Activated CD8-positive, alpha-beta memory T cell treated with anti-CD3 and anti-CD28 coated beads, Interleukin-2, amount 10 ng/mL, durations not matched to agents 7 days and 5 days (primary cell): ENCODE measurements at regions of chr2 and their contacts with region 1.

Region 1: DNA sequence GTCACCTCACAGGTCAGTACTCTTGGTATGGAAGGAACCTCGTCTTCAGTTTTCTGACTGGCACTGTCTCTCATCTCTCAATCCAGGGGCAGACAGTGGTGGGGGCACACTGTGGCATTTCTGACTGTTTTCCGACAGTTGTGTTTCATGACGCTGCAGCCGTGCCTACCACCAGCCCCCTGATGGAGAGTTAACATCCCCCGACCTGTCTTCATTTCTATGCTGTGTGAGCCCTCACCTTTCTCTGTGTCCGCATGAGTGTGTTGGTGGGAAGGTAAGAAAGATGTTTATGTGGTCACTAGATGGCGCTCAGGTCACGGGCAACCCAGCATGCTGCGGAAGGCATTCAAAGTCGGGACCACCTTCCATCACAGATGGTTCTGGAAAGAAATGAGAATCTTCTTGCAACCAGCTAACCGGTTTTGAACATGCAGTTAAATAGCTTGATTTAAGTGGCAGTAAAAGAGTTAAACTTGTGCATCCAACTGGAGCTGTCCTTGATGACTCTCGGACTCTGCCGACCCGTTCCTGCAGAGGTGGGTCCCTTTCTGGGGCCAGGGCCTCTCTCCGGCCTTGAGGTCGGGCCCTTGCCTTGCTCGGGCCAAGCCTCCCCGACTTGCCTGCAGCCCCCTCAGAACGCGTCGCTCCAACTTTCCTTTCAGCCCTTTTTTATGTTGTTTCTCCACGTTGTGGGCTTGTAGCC is 92.4 kb downstream of the DYSF start:
- DNase-seq: peak; percentile 66
- ATAC-seq: peak; percentile 77
- H3K4me3 Mint-ChIP-seq: peak overlapping the region; percentile 57
- H3K27ac Mint-ChIP-seq: peak overlapping the region; percentile 8
- H3K4me1 Mint-ChIP-seq: peaks cover 13% of the 10 kb centered on the region
- H3K27me3 Mint-ChIP-seq: peaks cover 13% of the 10 kb centered on the region

Region 2: DNA sequence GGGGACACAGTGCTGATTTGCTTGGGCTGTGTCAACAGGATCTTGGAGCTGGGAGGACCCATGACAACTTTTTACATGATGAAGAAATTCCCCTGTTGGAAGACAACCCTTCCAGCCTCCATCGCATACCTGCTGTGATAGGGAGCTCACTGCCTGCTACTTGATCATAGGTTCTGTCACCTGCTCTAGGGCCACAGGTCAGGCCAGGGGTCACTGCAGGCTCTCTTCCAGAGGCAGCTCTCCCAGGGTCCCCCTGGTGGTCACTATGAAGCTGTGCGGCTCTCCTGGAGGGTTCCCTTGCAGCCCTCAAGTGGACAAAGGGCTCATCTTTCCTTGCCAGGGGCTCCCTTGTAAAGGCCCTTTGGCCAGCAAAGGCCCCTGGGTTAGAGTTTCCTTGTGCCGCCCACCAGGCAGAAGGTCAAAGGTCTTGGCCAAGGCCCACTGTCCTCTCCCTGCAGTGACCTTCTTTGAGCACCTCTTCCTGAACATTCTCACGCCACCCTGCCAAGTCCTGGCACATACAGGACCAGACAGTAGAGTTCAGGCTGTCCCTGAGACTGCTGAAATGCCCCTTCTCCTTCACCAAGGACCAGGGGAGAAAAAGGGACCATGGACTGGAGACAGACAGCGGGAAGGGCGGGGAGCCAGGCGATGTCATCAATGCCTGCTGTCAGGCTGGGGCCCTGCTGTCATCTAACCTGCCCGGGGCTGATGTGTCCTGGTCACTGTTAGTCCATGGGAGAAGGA is 252.7 kb after region 1 on chr2:
- CTCF ChIA-PET with region 1: interaction called, 20 read pairs
- DNase-seq: peak; percentile 42
- ATAC-seq: no peak
- H3K4me3 Mint-ChIP-seq: no peak overlapping the region
- H3K27ac Mint-ChIP-seq: no peak overlapping the region
- H3K4me1 Mint-ChIP-seq: no peaks in the 10 kb centered on the region
- H3K27me3 Mint-ChIP-seq: no peaks in the 10 kb centered on the region

Region 3: DNA sequence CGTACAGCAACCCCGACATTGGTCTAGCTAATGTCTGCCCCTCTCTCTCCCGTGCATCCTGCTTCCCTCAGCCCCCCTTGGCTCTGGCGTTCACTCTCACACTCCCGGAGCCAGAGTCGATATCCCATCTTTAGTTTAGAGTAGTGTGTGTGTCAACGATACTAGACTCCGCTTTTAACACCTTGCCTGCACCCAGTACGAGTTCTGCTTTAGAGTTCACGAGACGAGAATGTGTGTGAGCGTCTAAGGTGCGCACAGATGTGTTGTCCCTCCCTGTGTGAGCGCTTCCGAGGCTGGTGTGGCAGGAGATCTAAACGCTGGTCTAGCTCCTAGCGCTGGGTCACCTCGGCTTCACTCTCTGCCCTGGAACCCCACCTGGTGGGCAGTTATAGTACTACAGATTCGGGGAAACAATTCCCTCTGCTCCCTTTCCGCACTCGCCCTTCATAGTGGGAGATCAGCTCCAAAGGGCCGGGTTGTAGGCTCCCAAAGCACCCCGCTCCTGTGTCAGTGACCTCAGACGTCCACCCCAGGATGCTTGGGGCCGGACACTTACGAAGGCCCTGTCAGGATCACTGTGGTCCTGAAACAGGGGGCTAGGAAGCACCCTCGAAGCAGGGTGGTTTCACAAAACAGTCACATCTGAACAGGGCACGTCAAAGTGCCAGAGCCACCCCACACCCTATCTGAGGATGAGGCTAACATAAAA is 604.6 kb after region 1 on chr2:
- CTCF ChIA-PET with region 1: interaction called, 29 read pairs
- DNase-seq: peak; percentile 74
- ATAC-seq: peak; percentile 68
- H3K4me3 Mint-ChIP-seq: peak overlapping the region; percentile 43
- H3K27ac Mint-ChIP-seq: no peak overlapping the region
- H3K4me1 Mint-ChIP-seq: peaks cover 28% of the 10 kb centered on the region
- H3K27me3 Mint-ChIP-seq: peaks cover 62% of the 10 kb centered on the region